ENCODE measurements at regions of chr20 and their contacts with region 1.

Region 1: GRCh38 chr20:17682103-17682888 is at the start of gene RRBP1:
- DNase-seq: peak; percentile 98 to 100 (median 100)

Region 2: GRCh38 chr20:17536944-17537444 is 145.3 kb before region 1 on chr20:
- intact Hi-C with region 1: loop called (anchors 10 kb)
- DNase-seq: peak in 7 of 10 donors; percentile 34 to 93 (median 65)

Region 3: DNA sequence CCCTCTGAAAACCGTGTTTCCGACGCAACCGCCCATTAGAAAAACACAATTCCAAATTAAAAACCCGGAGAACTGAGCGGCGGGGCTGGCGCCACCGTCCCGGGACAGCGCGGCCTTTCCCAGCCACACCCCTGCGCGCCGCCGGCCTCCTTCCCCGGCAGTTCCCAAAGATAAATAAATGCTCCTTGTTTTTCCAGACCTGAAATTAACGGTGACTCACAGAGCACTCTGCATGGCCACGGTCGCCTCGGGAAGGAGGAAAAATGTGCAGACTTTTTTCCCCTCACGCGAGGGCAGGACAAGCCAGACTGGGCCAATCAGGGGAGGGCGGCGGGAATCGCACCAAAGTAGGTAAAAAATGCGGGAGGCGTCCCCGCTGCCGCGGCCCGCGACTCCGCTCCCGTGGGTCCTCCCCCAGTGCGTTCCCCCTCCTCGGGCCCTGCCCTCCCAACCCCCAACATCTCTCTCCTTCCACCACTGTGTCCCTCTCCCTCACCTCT is 113.3 kb before region 1 on chr20:
- intact Hi-C with region 1: loop called (anchors 1 kb)
- DNase-seq: peak; percentile 16 to 90 (median 45)

Region 4: GRCh38 chr20:17636523-17637412 is 45.5 kb before region 1 on chr20:
- intact Hi-C with region 1: loop called (anchors 1 kb)
- DNase-seq: peak; percentile 71 to 97 (median 79)

Region 5: DNA sequence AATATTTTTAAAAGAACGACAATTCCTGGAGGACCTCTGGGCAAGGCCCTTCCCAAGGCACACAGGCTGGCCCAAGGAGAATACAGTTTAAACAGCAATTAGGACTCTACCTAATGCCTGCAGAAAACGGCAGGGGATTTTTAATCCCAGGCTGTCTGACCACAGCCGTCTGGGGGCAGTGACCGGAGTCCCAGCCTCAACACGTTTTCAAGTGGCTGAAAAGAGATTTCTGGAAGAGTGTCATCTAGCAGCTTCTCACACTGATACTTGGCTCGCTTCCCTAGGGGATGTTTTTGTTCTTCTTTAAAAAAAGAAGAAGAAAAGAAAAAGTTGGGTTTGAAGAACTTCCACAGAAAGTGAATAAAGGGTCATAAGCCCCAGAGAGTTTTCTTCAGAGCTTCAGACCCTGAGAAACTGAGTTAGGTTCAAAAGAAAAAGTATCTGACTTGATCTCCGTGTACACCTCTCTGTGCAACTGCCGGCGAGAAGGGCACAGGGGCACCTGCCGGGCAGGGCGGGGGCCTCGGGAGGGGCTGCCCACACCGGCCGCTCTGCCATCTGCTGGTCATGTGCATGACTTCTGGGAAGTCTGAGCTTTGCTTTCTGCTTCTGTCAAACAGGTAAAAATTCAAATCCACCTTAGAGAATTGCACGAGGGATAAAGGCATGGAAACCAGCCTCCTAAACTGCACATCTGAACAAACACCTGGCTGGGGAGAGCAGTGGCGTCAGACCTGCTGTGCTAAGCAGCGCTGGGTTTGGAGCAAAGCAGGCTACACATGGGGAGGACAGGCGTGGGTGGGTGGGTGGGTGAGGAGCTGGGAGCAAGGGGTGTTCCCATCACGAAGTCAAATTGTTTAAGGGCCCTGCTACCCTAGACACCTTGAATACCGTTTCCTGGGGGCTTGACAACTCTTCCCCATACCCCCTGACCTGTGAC is 33.2 kb before region 1 on chr20:
- intact Hi-C with region 1: no loop called
- DNase-seq: peak in 2 of 10 donors; percentile 75 to 78

Region 6: GRCh38 chr20:17822039-17822438 is 139.7 kb after region 1 on chr20:
- intact Hi-C with region 1: no loop called
- DNase-seq: no peak

Region 7: DNA sequence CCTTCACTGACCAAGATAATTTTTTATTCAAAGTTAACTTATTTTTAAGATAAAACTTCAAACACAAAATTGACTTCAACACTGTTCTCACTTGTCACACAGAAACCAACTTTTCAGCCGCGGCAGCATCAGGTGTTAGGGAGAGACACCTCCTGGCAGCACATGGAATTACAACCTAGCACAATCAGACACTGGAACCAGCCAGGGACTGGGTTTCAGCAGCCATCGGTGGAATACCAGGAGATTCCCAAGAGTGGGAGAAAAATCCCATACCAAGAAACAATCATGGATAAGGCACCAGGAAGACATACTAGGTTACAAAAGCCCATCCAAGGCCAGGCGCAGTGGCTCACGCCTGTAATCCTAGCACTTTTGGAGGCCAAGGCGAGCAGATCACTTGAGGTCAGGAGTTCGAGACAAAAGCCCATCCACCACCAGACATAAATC is 216.3 kb after region 1 on chr20:
- intact Hi-C with region 1: loop called (anchors 2 kb)
- DNase-seq: peak in 7 of 10 donors; percentile 55 to 93 (median 70)

Region 8: GRCh38 chr20:17968366-17969279 is 286.3 kb after region 1 on chr20 and contains the starts of genes MGME1 and SNX5:
- intact Hi-C with region 1: loop called (anchors 10 kb)
- DNase-seq: peak; percentile 97 to 100 (median 100)

Region 9: DNA sequence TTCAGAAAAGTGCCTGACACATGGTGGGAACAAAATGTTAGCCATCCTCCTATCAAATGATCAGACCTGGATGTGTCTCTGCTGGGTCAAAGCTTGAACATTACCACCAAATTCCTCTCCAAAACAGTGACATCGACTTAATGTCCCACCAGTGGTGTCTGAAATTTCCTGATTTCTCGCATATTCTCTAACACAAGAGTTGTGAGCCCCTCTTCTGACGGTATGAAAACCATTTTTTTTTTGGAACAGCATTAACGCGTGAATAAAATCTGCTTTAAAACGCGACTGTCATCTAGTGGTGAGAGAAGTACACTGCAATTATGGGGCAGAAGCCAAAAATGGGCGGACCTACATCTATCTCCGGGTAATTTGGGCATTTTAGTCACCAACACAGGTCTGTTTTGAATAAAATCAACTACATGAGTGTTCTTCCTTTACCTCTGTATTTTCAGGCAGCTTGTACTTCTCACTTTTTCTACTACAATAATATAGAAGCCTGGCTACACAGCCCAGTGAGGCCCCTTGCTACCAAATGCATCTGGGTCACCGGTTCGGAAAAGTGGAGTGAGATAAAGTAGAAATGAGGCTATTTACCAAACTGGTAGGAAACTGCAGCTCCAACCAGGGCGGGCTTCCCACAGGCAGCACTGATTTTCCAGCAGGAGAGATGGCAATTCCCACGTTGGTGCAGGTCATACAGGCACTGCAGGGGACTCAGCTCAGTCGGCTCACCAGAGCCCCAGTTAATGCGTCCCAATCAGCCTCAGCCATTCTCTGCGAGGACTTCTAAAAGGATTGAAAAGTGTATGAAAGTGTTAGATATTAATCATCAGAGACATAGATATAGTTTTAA is 313.9 kb after region 1 on chr20:
- intact Hi-C with region 1: loop called (anchors 10 kb)
- DNase-seq: peak in 2 of 10 donors; percentile 29 to 80

Measured in posterior cingulate gyrus (tissue), 11 donors.